ENCODE measurements at regions of chr20 and their contacts with region 1.

Region 1: GRCh38 chr20:35881676-35882075 is 72.6 kb downstream of the SCAND1 start:
- DNase-seq: no peak
- H3K4me3 ChIP-seq: no peak overlapping the region
- H3K27ac ChIP-seq: no peak overlapping the region
- H3K4me1 ChIP-seq: no peaks in the 10 kb centered on the region
- H3K27me3 ChIP-seq: no peaks in the 10 kb centered on the region
- CTCF ChIP-seq: no peak

Region 2: GRCh38 chr20:35823937-35824336 is 57.7 kb before region 1 on chr20:
- CTCF ChIA-PET with region 1: interaction called, 12 read pairs
- POLR2A ChIA-PET with region 1: no interaction called
- intact Hi-C with region 1: no loop called
- DNase-seq: no peak
- H3K4me3 ChIP-seq: no peak overlapping the region
- H3K27ac ChIP-seq: no peak overlapping the region
- H3K4me1 ChIP-seq: peaks cover 8% of the 10 kb centered on the region
- H3K27me3 ChIP-seq: no peaks in the 10 kb centered on the region
- CTCF ChIP-seq: no peak

Region 3: DNA sequence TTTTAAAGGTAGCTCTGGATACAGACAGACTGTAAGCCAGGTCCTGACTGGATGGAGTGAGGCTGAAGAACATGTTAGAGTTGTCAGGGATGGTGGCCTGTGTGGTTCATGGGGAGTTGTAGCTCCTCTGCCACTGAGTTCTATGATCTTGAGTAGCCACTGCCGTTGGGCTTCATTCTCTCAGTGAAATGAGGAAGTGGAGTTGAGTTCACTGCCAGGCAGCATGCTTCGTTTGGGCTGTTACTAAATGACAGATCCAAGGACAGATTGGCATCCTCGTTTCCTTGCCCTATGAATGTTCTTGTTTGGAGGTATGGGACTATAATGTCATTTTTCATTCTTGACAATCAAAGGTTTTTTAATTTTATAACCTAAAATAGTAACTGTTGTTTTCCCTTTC is 35.4 kb after region 1 on chr20:
- CTCF ChIA-PET with region 1: no interaction called
- POLR2A ChIA-PET with region 1: no interaction called
- intact Hi-C with region 1: no loop called
- DNase-seq: no peak
- H3K4me3 ChIP-seq: no peak overlapping the region
- H3K27ac ChIP-seq: no peak overlapping the region
- H3K4me1 ChIP-seq: no peaks in the 10 kb centered on the region
- H3K27me3 ChIP-seq: no peaks in the 10 kb centered on the region
- CTCF ChIP-seq: no peak

Measured in A673 (cell line).